Caco-2 (cell line): ENCODE measurements at regions of chr11 and their contacts with region 1.

Region 1: GRCh38 chr11:62370743-62371440 is 33.6 kb downstream of the ASRGL1 start:
- DNase-seq: no peak
- H3K4me3 ChIP-seq: no peak overlapping the region
- H3K4me3 Mint-ChIP-seq: peak overlapping the region; percentile 50
- H3K27ac Mint-ChIP-seq: no peak overlapping the region
- H3K4me1 ChIP-seq: peaks cover 36% of the 10 kb centered on the region
- H3K4me1 Mint-ChIP-seq: peaks cover 37% of the 10 kb centered on the region
- H3K27me3 ChIP-seq: no peaks in the 10 kb centered on the region
- H3K27me3 Mint-ChIP-seq: no peaks in the 10 kb centered on the region
- CTCF ChIP-seq: no peak

Region 2: DNA sequence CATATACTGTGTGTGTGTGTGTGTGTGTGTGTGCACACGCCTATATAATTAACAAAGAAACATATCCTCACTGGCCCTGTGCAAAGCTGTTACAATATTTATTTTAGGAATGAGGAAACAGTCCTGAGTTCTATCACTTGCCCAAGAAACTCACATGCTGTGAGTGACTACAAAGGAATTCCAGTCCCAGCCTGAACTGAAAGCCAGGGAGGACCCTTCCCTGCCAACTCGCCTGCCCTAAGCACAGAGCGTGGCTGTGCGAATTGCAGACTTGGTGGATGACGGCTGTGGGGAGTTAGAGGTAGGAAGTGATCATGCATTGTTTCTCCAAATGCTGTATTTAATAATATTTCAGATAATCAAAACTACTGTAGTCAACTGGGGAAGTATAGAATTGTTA is 1295.0 kb before region 1 on chr11:
- CTCF ChIA-PET with region 1: no interaction called
- POLR2A ChIA-PET with region 1: no interaction called
- intact Hi-C with region 1: loop called (anchors 5 kb)
- DNase-seq: peak; percentile 55 to 62
- H3K4me3 ChIP-seq: no peak overlapping the region
- H3K4me3 Mint-ChIP-seq: no peak overlapping the region
- H3K27ac Mint-ChIP-seq: no peak overlapping the region
- H3K4me1 ChIP-seq: no peaks in the 10 kb centered on the region
- H3K4me1 Mint-ChIP-seq: no peaks in the 10 kb centered on the region
- H3K27me3 ChIP-seq: no peaks in the 10 kb centered on the region
- H3K27me3 Mint-ChIP-seq: no peaks in the 10 kb centered on the region
- CTCF ChIP-seq: no peak

Region 3: GRCh38 chr11:62186195-62186594 is 184.7 kb before region 1 on chr11:
- CTCF ChIA-PET with region 1: no interaction called
- POLR2A ChIA-PET with region 1: no interaction called
- intact Hi-C with region 1: no loop called
- DNase-seq: no peak
- H3K4me3 ChIP-seq: no peak overlapping the region
- H3K4me3 Mint-ChIP-seq: no peak overlapping the region
- H3K27ac Mint-ChIP-seq: no peak overlapping the region
- H3K4me1 ChIP-seq: no peaks in the 10 kb centered on the region; the same call in 1 of the 2 replicates
- H3K4me1 Mint-ChIP-seq: no peaks in the 10 kb centered on the region
- H3K27me3 ChIP-seq: peaks cover 5% of the 10 kb centered on the region
- H3K27me3 Mint-ChIP-seq: peaks cover 29% of the 10 kb centered on the region
- CTCF ChIP-seq: no peak

Region 4: DNA sequence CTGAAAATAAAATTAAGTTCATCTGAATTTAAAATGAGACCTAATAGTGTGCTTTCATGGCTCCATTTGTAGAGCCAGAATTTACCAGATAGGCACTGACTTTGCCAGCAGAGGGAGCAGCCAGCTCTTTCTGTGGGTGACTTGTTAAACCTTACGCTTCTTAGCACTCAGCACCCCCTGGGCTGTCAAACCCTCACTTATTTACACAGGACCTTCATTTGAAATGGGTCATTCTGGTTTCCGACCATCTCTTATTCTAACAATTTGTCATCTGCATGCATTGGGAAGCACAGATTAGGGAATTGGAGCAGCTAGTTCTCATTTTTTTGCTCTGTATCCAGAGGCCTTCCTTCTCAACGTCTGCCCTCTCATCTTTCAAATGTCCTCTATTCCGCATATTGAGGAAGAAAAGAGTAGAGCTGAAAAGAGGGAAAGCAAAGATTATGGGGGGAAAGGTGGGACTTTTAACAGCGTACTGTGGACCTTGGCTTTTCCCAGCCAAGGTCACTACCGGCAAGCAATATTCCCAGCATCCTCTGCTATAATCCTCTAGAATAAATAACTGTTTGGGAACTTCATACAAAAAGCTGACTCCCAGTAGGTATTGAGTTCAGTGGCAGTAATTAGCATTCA is 30.5 kb before region 1 on chr11:
- CTCF ChIA-PET with region 1: interaction called, 5 read pairs
- POLR2A ChIA-PET with region 1: no interaction called
- intact Hi-C with region 1: loop called (anchors 2 kb)
- DNase-seq: peak; percentile 58 to 67
- H3K4me3 ChIP-seq: no peak overlapping the region
- H3K4me3 Mint-ChIP-seq: no peak overlapping the region
- H3K27ac Mint-ChIP-seq: no peak overlapping the region
- H3K4me1 ChIP-seq: peaks cover 8% of the 10 kb centered on the region; the same call in 1 of the 2 replicates
- H3K4me1 Mint-ChIP-seq: peaks cover 33% of the 10 kb centered on the region
- H3K27me3 ChIP-seq: no peaks in the 10 kb centered on the region
- H3K27me3 Mint-ChIP-seq: no peaks in the 10 kb centered on the region
- CTCF ChIP-seq: peak; percentile 82 to 87

Region 5: DNA sequence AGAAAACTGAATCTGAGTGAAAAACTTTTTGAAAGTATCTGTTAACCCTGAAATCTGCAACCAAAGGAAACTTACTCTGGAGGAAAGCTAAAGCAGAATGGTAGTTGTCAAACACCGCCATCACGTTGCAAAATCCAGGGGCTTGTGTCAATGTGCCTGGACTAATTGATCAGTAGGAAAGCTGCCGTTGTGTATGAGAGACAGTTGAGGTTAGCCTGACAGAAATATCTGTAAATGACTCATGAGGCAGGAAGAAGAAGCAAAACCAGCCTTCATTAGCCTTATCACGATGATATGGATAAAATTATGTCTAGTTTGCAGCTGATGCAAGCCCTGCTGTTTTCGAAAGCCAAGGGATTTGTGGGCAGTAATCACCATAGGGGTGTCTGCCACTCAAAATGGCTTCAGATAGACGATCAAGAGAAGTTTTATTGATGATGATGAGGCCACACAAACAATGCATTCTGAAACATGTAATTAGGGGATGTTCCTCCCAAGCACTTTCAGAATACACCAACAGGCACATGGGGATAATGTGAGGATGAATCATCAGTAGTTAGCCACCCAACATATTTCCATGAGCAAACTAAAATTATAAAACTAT is 56.8 kb after region 1 on chr11:
- CTCF ChIA-PET with region 1: no interaction called
- POLR2A ChIA-PET with region 1: no interaction called
- intact Hi-C with region 1: no loop called
- DNase-seq: no peak
- H3K4me3 ChIP-seq: no peak overlapping the region
- H3K4me3 Mint-ChIP-seq: no peak overlapping the region
- H3K27ac Mint-ChIP-seq: peak overlapping the region; percentile 91
- H3K4me1 ChIP-seq: peaks cover 75% of the 10 kb centered on the region
- H3K4me1 Mint-ChIP-seq: peaks cover 46% of the 10 kb centered on the region
- H3K27me3 ChIP-seq: no peaks in the 10 kb centered on the region
- H3K27me3 Mint-ChIP-seq: no peaks in the 10 kb centered on the region
- CTCF ChIP-seq: no peak

Region 6: DNA sequence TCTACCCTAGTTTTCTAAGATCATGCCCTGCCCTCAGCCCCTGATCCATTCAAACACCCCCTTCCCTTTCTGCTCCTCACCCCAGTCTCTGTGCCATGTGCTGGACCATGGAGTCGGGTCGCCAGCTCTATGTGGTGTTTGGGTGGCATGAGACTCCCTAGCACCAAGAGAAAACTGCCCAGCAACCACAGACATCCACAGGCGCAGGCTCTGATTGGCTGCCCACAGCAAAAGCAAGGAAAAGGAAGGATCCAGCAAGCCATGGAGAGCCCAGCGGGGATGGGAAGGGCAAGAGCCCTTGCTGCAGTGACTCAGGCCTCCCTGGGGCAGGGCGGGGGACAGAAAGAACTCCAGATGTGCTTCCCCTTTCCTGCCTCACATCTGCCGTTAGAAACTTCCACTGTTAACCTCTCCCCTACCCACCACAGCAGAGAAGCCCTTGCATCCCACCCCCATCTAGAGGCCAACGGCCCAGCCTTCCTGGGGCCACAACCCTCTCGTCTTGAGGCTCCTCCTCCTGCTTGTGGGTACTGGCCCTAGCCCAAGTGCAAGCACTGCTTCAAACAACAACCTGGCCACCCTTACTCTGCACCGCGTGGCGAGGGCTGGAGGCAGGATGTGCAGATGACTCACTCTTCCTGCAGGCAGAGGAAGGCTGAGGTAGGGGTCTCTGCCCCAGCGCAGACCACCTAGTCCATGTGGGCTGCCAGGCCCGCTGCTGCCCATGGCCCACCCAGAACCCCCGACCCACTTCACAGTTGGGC is 185.4 kb after region 1 on chr11:
- CTCF ChIA-PET with region 1: no interaction called
- POLR2A ChIA-PET with region 1: no interaction called
- intact Hi-C with region 1: no loop called
- DNase-seq: peak; percentile 57 to 78
- H3K4me3 ChIP-seq: no peak overlapping the region
- H3K4me3 Mint-ChIP-seq: peak overlapping the region; percentile 25
- H3K27ac Mint-ChIP-seq: peak overlapping the region; percentile 96
- H3K4me1 ChIP-seq: peaks cover 89% of the 10 kb centered on the region
- H3K4me1 Mint-ChIP-seq: peaks cover 70% of the 10 kb centered on the region
- H3K27me3 ChIP-seq: no peaks in the 10 kb centered on the region
- H3K27me3 Mint-ChIP-seq: no peaks in the 10 kb centered on the region
- CTCF ChIP-seq: no peak